ENCODE measurements at regions of chr14 and their contacts with region 1.

Region 1: GRCh38 chr14:74018586-74019407 is at the starts of genes BBOF1 and ENTPD5:
- DNase-seq: peak; percentile 70 to 83
- ATAC-seq: peak; percentile 92 to 95
- H3K4me3 ChIP-seq: peak within 1 kb of the TSS; percentile 66 to 94 (median 86)
- H3K27ac ChIP-seq: peak within 1 kb of the TSS; percentile 90 to 100 (median 98)
- H3K4me1 ChIP-seq: peaks cover 6 to 12% of the 10 kb centered on the region in 2 donors
- H3K27me3 ChIP-seq: no peaks in the 10 kb centered on the region
- CTCF ChIP-seq: peak in 1 of 5 experiments; percentile 23
- POLR2A ChIP-seq: peak; percentile 93 to 95
- total RNA-seq, gene BBOF1: 0.95 to 8.7 (median 1.9) TPM
- total RNA-seq, gene ENTPD5: 5.4 to 10.2 (median 7.3) TPM

Region 2: GRCh38 chr14:73458151-73458976 is 560.4 kb before region 1 on chr14 and contains the start of gene NUMB:
- in situ Hi-C with region 1: no loop called
- intact Hi-C with region 1: loop called (anchors 1 kb)
- DNase-seq: peak; percentile 99
- ATAC-seq: peak; percentile 98 to 99
- H3K4me3 ChIP-seq: peak within 1 kb of the TSS; percentile 78 to 94 (median 90)
- H3K27ac ChIP-seq: peak within 1 kb of the TSS; percentile 90 to 94 (median 92)
- H3K4me1 ChIP-seq: peaks cover 50 to 71% of the 10 kb centered on the region in 2 donors
- H3K27me3 ChIP-seq: no peaks in the 10 kb centered on the region
- CTCF ChIP-seq: peak in 3 of 5 experiments; percentile 12 to 27 (median 15)
- POLR2A ChIP-seq: peak; percentile 78 to 85
- total RNA-seq, gene NUMB: 14.3 to 29.8 (median 23.6) TPM

Region 3: DNA sequence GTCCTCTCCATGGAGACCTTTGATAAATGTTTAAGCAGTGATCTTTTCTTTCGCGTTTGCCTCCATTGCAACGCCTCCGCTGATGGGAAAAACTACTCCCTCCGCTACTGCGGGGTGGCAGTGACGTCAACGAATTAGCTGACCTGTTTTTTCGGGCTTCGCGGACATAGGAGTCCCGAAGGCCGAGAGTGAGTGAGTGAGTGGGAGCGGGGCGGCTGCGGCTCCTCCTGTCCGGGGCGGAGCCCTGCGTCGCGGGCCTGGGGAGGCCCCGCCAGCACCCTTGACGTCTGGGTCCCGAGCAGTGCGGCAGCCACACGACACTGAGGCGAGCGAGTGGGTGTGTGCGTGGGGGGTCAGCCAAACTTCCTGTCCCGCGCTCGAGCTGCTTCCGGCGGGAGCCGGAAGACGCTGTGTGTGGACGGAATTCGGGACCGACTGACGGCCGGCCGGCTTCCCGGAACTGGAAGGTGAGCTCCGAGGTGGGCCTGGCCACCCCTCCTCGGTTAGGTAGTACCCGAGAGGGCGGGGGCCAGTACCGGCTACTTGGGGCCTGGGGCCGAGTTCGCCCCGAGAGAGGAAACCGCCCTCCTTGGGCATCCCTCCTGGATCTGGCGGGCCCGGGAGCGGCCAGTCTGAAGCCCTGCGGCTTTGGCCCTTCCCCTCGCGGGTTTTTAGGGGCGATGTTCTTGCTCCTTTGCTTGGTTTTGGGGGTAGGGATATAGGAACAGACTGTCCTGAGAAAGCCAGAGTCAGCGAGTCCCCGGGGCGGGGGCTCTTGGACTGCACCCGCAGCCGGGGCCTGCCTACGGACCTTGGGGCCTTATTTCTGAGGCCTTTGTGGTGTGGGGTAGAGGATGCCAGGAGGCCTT is 132.1 kb before region 1 on chr14 and contains the start of gene ZNF410:
- in situ Hi-C with region 1: no loop called
- intact Hi-C with region 1: loop called (anchors 5 kb)
- DNase-seq: peak; percentile 92
- ATAC-seq: peak; percentile 95 to 96
- H3K4me3 ChIP-seq: peak within 1 kb of the TSS; percentile 79 to 100 (median 84)
- H3K27ac ChIP-seq: peak within 1 kb of the TSS; percentile 84 to 98 (median 92)
- H3K4me1 ChIP-seq: peaks cover 30 to 31% of the 10 kb centered on the region in 2 donors
- H3K27me3 ChIP-seq: no peaks in the 10 kb centered on the region
- CTCF ChIP-seq: peak in 1 of 5 experiments; percentile 11
- POLR2A ChIP-seq: peak; percentile 72 to 78
- total RNA-seq, gene ZNF410: 22.6 to 33.2 (median 24.0) TPM

Region 4: GRCh38 chr14:73949744-73950734 is 68.8 kb before region 1 on chr14 and contains the starts of genes COQ6 and FAM161B:
- in situ Hi-C with region 1: no loop called
- intact Hi-C with region 1: loop called (anchors 1 kb)
- DNase-seq: peak; percentile 94 to 95
- ATAC-seq: peak; percentile 98
- H3K4me3 ChIP-seq: peak within 1 kb of the TSS; percentile 68 to 97 (median 94)
- H3K27ac ChIP-seq: peak within 1 kb of the TSS; percentile 90 to 98 (median 93)
- H3K4me1 ChIP-seq: peaks cover 9 to 21% of the 10 kb centered on the region in 2 donors
- H3K27me3 ChIP-seq: no peaks in the 10 kb centered on the region
- CTCF ChIP-seq: peak in 3 of 5 experiments; percentile 8 to 20 (median 16)
- POLR2A ChIP-seq: peak; percentile 79
- total RNA-seq, gene COQ6: 36.5 to 60.6 (median 42.2) TPM
- total RNA-seq, gene FAM161B: 5.0 to 7.7 (median 6.0) TPM

Region 5: DNA sequence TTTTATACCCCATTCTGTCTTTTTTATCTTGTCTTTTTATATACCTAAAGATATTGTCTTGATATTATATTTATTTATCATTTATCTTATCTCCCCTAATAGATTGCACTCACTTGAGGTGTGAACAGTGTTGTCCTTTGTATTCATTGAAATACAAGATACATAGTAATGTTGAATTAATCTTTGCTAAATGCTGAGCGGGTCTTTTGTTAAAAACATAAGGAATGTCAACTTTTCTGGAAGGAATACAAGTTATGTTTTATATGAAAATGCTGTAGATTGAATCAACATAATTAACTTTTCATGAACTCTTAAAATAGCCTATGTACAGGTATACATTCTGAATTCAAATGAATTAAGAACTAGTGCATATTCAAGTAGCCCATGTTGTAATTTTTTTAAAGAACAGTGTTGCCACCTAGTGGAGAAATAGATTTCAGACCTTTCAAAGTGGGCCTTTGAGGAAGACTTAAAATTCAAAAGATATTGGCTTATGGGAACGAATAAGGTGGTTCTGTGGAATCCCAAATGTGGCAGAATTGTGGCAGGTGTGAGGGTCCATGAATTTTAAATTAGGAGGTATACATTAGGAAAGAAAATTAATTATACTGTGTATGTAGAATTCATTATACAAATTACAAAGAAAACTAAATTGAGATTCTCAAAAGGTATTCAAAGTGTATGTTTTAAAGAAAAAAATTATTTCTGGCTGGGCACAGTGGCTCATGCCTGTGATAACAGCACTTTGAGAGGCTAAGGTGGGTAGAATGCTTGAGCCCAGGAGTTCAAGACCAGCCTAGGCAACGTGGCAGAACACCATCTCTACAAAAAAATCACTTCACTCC is 19.4 kb after region 1 on chr14:
- in situ Hi-C with region 1: no loop called
- intact Hi-C with region 1: loop called (anchors 1 kb)
- DNase-seq: no peak
- ATAC-seq: peak; percentile 39 to 61
- H3K4me3 ChIP-seq: no peak overlapping the region
- H3K27ac ChIP-seq: no peak overlapping the region
- H3K4me1 ChIP-seq: no peaks in the 10 kb centered on the region
- H3K27me3 ChIP-seq: no peaks in the 10 kb centered on the region
- CTCF ChIP-seq: peak; percentile 29 to 69 (median 54)
- POLR2A ChIP-seq: no peak

Region 6: GRCh38 chr14:74084277-74085046 is 65.7 kb after region 1 on chr14 and contains the starts of genes ALDH6A1 and LIN52:
- in situ Hi-C with region 1: no loop called
- intact Hi-C with region 1: loop called (anchors 1 kb)
- DNase-seq: peak; percentile 100
- ATAC-seq: peak; percentile 95 to 96
- H3K4me3 ChIP-seq: peak within 1 kb of the TSS; percentile 59 to 98 (median 84)
- H3K27ac ChIP-seq: peak within 1 kb of the TSS; percentile 88 to 96 (median 93)
- H3K4me1 ChIP-seq: peaks cover 26 to 39% of the 10 kb centered on the region in 2 donors
- H3K27me3 ChIP-seq: no peaks in the 10 kb centered on the region
- CTCF ChIP-seq: peak in 3 of 5 experiments; percentile 24 to 42 (median 27)
- POLR2A ChIP-seq: peak; percentile 95 to 96
- total RNA-seq, gene ALDH6A1: 5.9 to 26.3 (median 20.3) TPM
- total RNA-seq, gene LIN52: 3.4 to 5.6 (median 4.3) TPM

Region 7: DNA sequence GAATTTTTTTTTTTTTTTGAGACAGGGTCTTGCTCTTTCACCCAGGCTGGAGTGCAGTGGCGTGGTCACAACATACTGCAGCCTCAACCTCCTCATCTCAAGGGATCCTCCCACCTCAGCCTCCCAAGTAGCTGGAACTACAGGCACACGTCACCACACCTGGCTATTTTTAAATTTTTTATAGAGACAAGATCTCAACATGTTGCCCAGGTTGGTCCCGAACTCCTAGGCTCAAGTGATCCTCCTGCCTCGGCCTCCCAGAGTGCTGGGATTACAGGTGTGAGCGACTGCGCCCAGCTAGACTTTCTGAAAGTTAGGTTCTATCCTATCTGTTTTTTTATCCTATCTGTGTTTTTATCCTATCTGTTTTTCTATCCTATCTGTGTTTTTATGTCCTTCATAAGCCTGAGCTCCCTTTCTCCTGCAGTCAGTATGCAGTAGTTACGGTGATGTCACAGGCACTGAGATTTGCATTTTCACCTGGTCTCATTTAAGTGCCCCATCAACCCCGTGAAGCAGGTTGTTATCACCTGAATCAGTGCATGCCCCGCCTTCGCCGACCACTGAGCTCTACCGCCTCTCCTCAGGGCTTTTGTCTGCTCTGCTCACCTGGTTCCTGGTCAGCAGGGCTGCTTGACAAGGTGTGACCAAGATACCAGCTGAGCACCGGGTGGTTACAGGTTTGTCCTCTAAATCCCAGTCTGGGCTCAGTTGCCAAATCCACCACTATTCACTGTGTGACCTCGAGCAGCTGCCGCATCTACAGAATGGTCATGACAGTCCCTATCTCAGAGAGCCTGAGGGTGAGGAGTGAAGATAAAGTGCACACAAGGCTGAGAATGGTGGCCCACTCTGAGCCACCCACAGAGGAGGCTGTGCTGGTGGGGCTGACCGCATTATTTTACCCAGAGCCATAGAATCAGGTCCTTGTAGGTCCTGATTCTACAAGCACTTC is 374.1 kb after region 1 on chr14:
- in situ Hi-C with region 1: no loop called
- intact Hi-C with region 1: no loop called
- DNase-seq: no peak
- ATAC-seq: no peak
- H3K4me3 ChIP-seq: no peak overlapping the region
- H3K27ac ChIP-seq: no peak overlapping the region
- H3K4me1 ChIP-seq: no peaks in the 10 kb centered on the region
- H3K27me3 ChIP-seq: peaks cover 0 to 5% (median 0%) of the 10 kb centered on the region in 3 donors
- CTCF ChIP-seq: no peak
- POLR2A ChIP-seq: no peak

Region 8: DNA sequence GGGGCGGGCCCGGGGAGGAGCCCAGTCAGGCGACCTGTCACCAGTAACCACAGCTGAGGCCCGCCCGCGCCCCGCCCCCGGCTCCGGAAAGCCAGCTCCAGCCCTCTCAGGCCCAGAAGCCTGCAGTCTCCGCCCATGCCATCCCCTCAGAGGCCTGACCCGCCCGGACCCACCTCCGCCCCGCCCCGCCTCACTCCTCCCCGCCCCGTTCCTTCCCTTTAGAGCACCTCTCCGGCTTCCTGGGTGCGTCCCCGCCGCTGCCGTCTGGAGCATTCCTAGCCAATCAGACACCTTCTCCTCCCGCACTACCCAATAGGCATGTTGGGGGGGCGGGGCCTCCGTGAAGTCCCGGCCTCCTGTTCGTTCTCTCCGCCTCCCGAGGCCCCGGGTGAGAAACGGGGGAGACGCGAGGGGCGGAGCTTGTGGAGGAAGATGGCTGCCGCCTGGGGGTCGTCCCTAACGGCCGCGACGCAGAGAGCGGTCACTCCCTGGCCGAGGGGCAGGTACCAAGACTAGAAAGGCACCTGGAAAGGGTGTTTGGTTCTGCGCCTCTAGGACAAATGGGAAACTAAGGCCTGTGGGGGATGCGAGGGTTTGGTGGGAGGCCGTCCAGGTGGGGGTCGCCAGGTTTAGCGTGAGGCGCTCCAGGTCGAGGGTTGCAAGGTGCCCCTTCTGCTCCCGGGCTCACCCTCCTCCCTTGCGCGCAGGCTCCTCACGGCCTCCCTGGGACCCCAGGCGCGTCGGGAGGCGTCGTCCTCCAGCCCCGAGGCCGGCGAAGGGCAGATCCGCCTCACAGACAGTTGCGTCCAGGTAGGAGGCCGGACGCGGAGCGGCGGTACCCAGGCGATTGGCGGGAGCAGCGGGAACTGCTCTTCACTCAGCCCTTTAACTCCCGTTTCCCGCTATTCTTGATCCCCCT is 474.8 kb after region 1 on chr14 and contains the start of gene ISCA2:
- in situ Hi-C with region 1: no loop called
- intact Hi-C with region 1: loop called (anchors 5 kb)
- DNase-seq: peak; percentile 100
- ATAC-seq: peak; percentile 94 to 95
- H3K4me3 ChIP-seq: peak within 1 kb of the TSS; percentile 91 to 97 (median 94)
- H3K27ac ChIP-seq: peak within 1 kb of the TSS; percentile 95 to 98 (median 96)
- H3K4me1 ChIP-seq: peaks cover 22 to 24% of the 10 kb centered on the region in 2 donors
- H3K27me3 ChIP-seq: no peaks in the 10 kb centered on the region
- CTCF ChIP-seq: no peak
- POLR2A ChIP-seq: peak; percentile 40 to 57
- total RNA-seq, gene ISCA2: 9.9 to 11.6 (median 11.4) TPM